Calu3 (cell line): ENCODE measurements at regions of chr15 and their contacts with region 1.

Region 1: DNA sequence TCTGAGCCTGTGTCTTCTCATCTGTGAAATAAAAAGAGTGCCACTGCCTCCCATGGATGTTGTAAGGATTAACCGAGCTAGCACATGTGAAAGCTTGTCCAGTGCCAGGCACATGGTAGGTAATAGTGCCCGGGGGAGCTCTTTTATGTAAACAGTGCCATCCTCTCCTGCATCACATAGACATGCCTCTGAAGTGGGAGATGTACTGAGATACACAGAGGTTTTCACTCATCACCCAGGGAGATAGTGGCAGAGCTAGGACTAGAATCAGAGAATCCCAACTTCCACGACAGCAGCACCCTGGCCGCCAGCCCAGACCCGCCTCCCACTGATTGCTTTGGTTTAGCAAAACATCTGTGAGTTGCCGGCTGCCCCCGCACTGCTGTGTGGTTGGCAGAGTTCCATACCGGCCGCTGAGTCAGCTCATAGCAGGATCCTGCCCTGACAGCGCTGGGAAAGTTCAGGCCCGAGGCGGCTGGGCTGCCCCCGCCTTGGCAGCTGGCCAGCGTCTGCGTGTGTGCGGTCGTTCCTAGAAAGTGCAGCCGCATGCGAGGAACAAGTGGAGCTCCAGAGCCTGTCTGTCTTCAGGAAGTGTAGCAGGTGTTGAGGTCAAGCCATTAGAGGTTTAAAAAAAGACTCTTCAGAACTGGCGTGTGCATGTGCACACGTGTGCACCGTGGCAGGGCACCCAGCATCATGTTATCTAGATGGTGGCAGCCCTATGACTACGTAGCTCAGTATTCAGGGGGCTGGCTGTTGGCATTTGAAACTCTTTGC is 5.0 kb downstream of the ARID3B start:
- DNase-seq: peak; percentile 99
- H3K4me3 Mint-ChIP-seq: peak overlapping the region; percentile 29
- H3K27ac Mint-ChIP-seq: peak overlapping the region; percentile 81
- H3K4me1 Mint-ChIP-seq: peaks cover 38% of the 10 kb centered on the region
- H3K27me3 Mint-ChIP-seq: peaks cover 26% of the 10 kb centered on the region
- CTCF ChIP-seq: no peak

Region 2: DNA sequence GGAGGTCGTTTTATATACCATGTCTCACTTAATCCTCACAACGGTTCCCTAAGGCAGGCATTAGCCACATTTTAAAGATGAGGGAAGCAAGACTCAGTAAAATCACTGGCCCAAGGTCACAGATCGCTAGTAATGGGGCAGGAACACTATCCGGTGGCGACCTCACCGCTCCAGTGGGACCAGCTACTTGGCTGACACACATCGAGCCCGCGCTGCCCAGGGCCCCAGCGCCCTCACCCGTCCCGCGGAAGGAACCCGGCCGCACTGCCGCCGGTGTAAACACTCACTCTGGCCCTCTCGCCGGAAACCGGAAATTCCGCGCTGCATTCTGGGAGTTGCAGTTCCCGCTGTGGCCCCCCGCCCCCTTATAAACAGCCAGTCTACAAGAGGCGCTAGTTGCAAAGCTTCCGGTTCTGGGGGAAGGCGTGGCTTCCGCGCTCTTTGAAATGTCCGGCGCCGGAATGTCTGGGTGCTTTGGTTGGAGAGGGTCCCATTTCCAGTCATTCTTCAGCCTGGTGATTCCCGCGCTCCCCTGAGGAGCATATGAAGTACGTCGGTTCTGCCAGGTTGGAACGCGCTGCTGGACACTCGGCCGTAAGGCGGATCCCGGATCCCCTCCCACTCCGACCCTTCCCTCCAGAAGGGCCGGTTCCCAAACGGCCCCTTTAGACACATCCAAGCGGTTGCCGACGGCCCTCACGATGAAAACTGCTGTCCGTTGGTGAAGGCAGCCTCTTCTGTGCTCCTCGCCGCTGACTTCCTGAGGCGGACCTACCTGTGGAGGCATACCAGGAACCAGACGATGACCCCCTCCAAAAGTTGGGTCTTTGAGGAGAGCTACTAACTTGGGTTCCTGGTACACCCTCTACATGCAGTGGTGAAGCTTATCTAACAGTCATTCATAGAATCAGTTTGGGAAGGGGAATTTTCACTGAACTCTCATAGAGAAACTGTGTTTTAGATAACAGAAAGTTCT is 84.9 kb before region 1 on chr15 and contains the start of gene UBL7:
- CTCF ChIA-PET with region 1: interaction called, 9 read pairs
- intact Hi-C with region 1: loop called (anchors 2 kb)
- DNase-seq: peak; percentile 98
- H3K4me3 Mint-ChIP-seq: peak within 1 kb of the TSS; percentile 66
- H3K27ac Mint-ChIP-seq: peak within 1 kb of the TSS; percentile 2
- H3K4me1 Mint-ChIP-seq: peaks cover 26% of the 10 kb centered on the region
- H3K27me3 Mint-ChIP-seq: no peaks in the 10 kb centered on the region
- CTCF ChIP-seq: no peak
- total RNA-seq, gene UBL7: 38.5 and 43.8 TPM in 2 replicates

Region 3: GRCh38 chr15:74489518-74490338 is 56.3 kb before region 1 on chr15:
- CTCF ChIA-PET with region 1: interaction called, 12 read pairs
- intact Hi-C with region 1: loop called (anchors 5 kb)
- DNase-seq: peak; percentile 76
- H3K4me3 Mint-ChIP-seq: no peak overlapping the region
- H3K27ac Mint-ChIP-seq: no peak overlapping the region
- H3K4me1 Mint-ChIP-seq: peaks cover 10% of the 10 kb centered on the region
- H3K27me3 Mint-ChIP-seq: no peaks in the 10 kb centered on the region
- CTCF ChIP-seq: peak; percentile 67

Region 4: DNA sequence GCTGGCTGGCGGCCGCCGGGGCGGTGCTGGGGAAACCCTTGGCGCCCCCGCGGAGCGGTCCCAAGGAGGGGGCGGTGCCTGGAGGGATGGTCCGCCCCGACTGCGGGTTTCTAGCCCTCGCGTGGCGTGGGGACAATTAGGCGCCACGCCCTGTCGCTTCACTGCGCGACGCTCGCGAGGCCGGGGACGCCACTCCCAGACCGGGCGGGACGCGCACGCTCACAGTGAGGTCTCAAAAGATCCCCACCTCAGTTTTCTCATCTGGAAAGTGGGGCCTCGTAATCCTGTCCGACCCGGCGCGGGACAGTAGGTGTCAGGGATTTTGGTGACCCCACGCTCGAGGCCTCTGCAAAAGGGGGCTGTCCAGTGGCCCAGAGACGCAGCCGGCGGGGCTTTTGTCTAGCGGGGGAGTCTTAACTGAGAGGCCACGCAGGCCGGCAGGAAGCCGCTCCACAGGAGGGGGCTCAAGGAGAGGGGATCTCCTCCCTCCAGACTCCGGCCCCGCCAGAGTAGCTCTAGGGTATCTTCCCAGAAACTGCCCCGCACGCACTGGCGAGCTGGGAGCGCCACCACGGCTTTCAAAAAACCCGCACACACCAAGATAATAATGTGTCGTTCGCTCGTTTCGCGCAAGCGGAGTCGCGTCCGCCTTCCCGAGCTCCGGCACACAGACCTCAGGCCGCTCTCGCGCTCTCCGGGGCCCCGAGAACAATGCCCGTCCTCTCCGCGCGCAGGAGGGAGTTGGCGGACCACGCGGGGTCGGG is 68.9 kb after region 1 on chr15:
- CTCF ChIA-PET with region 1: interaction called, 3 read pairs
- intact Hi-C with region 1: loop called (anchors 5 kb)
- DNase-seq: peak; percentile 85
- H3K4me3 Mint-ChIP-seq: peak overlapping the region; percentile 86
- H3K27ac Mint-ChIP-seq: peak overlapping the region; percentile 67
- H3K4me1 Mint-ChIP-seq: peaks cover 18% of the 10 kb centered on the region
- H3K27me3 Mint-ChIP-seq: peaks cover 37% of the 10 kb centered on the region
- CTCF ChIP-seq: no peak